ENCODE measurements at regions of chr13 and their contacts with region 1.

Region 1: DNA sequence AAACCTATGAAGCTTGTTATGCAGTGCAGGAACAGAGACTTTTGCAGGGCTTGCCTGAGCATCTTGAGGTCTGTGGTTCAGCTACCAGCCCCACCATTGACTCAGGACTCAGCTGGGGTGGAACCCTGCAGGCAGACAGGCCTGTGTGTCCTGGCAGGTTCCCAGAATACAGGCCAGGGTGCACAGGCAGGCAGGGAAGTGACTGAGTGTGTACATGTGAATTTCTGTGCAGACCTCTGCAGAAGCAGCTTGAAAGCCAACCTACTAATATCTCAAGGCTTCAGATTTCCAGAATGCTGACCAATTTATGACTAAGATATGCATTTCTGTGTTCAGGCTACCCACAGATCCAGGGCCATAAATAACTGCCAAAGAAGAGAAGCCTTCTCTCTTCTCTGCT is 254.4 kb downstream of the DLEU7 start:
- DNase-seq: no peak
- ATAC-seq: no peak
- H3K4me3 Mint-ChIP-seq: no peak overlapping the region
- H3K27ac Mint-ChIP-seq: peak overlapping the region; percentile 46
- H3K4me1 Mint-ChIP-seq: peaks cover 83% of the 10 kb centered on the region
- H3K27me3 Mint-ChIP-seq: no peaks in the 10 kb centered on the region
- CTCF ChIP-seq: no peak

Region 2: DNA sequence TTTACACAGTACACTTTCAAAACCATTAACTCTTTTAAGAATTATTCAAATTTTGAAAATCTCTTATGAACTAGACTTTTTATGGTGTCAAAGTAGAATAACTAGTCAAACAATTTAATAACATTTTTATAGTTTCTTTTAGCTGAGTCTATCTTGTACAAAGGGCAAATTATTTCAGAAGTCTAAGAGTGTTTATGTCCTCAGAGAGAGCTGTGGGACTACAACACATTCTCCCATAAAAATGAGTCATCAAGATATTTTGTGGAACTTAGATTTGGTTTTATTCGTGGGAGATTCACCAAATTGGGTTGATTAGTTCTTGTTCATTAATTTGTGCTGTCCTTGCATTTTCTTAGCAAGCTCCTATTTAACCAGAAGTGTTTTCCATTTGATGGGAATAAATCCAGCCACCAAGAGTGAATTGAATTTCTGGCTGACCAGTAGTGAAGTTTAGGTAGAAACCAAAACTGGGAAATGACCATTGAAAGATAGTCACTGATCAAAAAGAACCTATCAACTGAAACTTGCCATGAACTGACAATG is 36.6 kb before region 1 on chr13:
- CTCF ChIA-PET with region 1: no interaction called
- POLR2A ChIA-PET with region 1: no interaction called
- intact Hi-C with region 1: loop called (anchors 5 kb)
- DNase-seq: no peak
- ATAC-seq: no peak
- H3K4me3 Mint-ChIP-seq: no peak overlapping the region
- H3K27ac Mint-ChIP-seq: no peak overlapping the region
- H3K4me1 Mint-ChIP-seq: peaks cover 8% of the 10 kb centered on the region
- H3K27me3 Mint-ChIP-seq: no peaks in the 10 kb centered on the region
- CTCF ChIP-seq: no peak

Region 3: DNA sequence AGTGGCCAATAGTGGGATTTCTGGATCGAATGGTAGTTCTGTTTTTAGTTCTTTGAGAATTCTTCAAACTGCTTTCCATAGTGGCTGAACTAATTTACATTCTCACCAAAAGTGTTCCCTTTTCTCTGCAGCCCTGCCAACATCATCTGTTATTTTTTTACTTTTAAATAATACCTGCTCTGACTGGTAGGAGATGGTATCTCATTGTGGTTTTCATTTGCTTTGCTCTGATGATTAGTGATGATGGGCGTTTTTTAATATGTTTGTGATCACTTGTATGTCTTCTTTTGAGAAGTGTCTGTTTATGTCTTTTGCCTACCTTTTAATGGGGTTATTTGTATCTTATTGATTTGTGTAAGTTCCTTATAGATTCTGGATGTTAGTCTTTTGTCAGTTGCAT is 368.5 kb after region 1 on chr13:
- CTCF ChIA-PET with region 1: no interaction called
- POLR2A ChIA-PET with region 1: no interaction called
- intact Hi-C with region 1: no loop called
- DNase-seq: no peak
- ATAC-seq: no peak
- H3K4me3 Mint-ChIP-seq: no peak overlapping the region
- H3K27ac Mint-ChIP-seq: peak overlapping the region; percentile 41
- H3K4me1 Mint-ChIP-seq: peaks cover 11% of the 10 kb centered on the region
- H3K27me3 Mint-ChIP-seq: no peaks in the 10 kb centered on the region
- CTCF ChIP-seq: no peak

Region 4: GRCh38 chr13:51297556-51297955 is 708.4 kb after region 1 on chr13:
- CTCF ChIA-PET with region 1: no interaction called
- POLR2A ChIA-PET with region 1: no interaction called
- intact Hi-C with region 1: no loop called
- DNase-seq: no peak
- ATAC-seq: no peak
- H3K4me3 Mint-ChIP-seq: no peak overlapping the region
- H3K27ac Mint-ChIP-seq: no peak overlapping the region
- H3K4me1 Mint-ChIP-seq: no peaks in the 10 kb centered on the region
- H3K27me3 Mint-ChIP-seq: peaks cover 2% of the 10 kb centered on the region
- CTCF ChIP-seq: no peak

Measured in activated B cell treated with CpG ODN at 0.5 μM for 24 hours (primary cell).